Activated naive CD4-positive, alpha-beta T cell treated with anti-CD3 and anti-CD28 coated beads for 36 hours (primary cell): ENCODE measurements at regions of chr21 and their contacts with region 1.

Region 1: DNA sequence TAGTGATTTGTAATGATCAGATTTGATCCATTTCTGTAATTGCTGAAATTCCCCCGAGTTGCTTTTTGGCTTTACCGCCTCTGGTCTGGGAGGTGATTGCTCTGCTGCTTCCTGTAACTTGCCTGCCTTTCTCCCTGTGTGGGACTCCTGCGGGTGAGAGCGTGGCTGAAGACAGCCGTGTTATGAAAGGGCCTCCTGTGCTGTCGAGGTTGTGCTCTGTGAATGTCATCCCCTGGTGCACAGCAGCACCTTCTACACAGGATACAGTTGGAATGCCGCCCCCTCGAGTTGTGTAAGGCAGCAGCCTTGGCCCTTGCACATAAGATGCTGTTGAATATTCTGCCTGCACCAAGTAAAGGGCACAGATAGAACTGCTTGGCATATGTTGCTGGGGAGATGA is 5.9 kb downstream of the SOD1 start:
- DNase-seq: peak; percentile 66
- H3K4me3 Mint-ChIP-seq: peak overlapping the region; percentile 17
- H3K27ac Mint-ChIP-seq: peak overlapping the region; percentile 48
- H3K4me1 Mint-ChIP-seq: peaks cover 93% of the 10 kb centered on the region
- H3K27me3 Mint-ChIP-seq: no peaks in the 10 kb centered on the region

Region 2: GRCh38 chr21:31713973-31714740 is 48.8 kb after region 1 on chr21:
- CTCF ChIA-PET with region 1: no interaction called
- intact Hi-C with region 1: loop called (anchors 5 kb)
- DNase-seq: no peak
- H3K4me3 Mint-ChIP-seq: no peak overlapping the region
- H3K27ac Mint-ChIP-seq: peak overlapping the region; percentile 36
- H3K4me1 Mint-ChIP-seq: peaks cover 83% of the 10 kb centered on the region
- H3K27me3 Mint-ChIP-seq: no peaks in the 10 kb centered on the region